ENCODE measurements at regions of chr1 and their contacts with region 1.

Region 1: GRCh38 chr1:19918057-19918456 is 5.4 kb downstream of the PLA2G2E start:
- DNase-seq: peak; percentile 81 to 93 (median 85)
- ATAC-seq: peak; percentile 76
- H3K4me3 ChIP-seq: no peak overlapping the region
- H3K27ac ChIP-seq: no peak overlapping the region
- H3K4me1 ChIP-seq: no peaks in the 10 kb centered on the region
- H3K27me3 ChIP-seq: no peaks in the 10 kb centered on the region

Region 2: GRCh38 chr1:19825298-19825697 is 92.8 kb before region 1 on chr1:
- intact Hi-C with region 1: no loop called
- DNase-seq: no peak
- ATAC-seq: no peak
- H3K4me3 ChIP-seq: no peak overlapping the region
- H3K27ac ChIP-seq: no peak overlapping the region
- H3K4me1 ChIP-seq: no peaks in the 10 kb centered on the region
- H3K27me3 ChIP-seq: no peaks in the 10 kb centered on the region

Region 3: DNA sequence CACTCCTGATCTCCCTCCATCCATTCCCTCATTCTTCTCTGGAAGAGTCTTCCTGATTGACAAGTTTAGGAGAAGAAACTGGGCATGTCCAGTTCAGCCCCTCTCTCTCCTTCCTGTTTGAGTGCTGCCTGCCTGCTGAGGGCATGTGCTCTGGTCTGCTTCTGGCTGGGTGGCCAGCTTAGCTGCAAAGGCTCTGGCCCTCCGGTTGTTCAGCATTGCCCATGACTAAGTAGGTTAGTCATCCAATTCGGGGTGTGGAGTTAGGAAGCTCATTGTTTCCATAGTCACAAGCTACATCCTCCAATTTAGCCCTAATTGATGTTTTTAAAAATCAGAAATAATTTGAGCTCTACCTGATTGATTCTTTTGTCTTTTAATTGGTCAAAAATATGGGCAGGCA is 31.0 kb after region 1 on chr1:
- intact Hi-C with region 1: no loop called
- DNase-seq: no peak
- ATAC-seq: peak in 1 of 2 donors; percentile 47
- H3K4me3 ChIP-seq: no peak overlapping the region
- H3K27ac ChIP-seq: no peak overlapping the region
- H3K4me1 ChIP-seq: no peaks in the 10 kb centered on the region
- H3K27me3 ChIP-seq: no peaks in the 10 kb centered on the region

Region 4: GRCh38 chr1:19974822-19975416 is 56.9 kb after region 1 on chr1:
- intact Hi-C with region 1: no loop called
- DNase-seq: peak; percentile 62 to 80 (median 65)
- ATAC-seq: peak; percentile 84 to 86
- H3K4me3 ChIP-seq: no peak overlapping the region
- H3K27ac ChIP-seq: peak overlapping the region; percentile 73
- H3K4me1 ChIP-seq: peaks cover 6% of the 10 kb centered on the region
- H3K27me3 ChIP-seq: no peaks in the 10 kb centered on the region

Region 5: DNA sequence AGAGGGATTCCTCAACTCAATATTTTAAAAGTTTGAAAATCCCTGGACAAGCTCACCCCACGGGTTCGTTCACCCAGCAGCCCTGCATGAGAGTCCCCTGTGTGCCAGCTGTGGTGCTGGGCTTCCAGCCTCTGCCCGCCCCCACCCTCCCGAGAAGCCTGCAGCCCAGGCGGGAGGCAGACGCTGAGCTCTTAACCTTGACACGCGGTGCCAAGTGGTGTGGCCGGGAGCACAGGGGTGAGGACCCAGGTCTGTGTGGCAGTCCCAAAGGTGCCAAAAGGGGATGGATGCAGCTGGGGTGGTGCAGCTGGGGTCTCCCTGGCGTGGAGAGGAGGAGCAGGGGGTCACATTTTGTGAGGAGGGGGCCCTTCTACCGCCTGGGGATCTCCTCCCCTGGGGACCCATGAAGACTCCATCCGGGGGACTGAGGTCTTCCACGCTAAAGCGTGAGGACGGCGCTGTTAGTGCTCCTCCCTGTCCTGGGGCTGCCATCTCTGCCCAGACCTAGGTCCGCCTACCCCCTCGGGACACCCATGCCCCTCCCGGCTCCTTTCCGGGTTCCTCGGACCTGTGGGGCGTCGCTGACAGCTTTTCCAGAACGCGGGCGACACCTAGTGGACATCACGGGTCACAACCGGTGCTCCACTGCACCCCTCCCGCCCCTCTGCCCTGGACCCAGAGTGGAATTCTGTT is 234.0 kb after region 1 on chr1:
- intact Hi-C with region 1: loop called (anchors 2 to 5 kb)
- DNase-seq: peak; percentile 93 to 96 (median 96)
- ATAC-seq: peak; percentile 88 to 92
- H3K4me3 ChIP-seq: no peak overlapping the region
- H3K27ac ChIP-seq: no peak overlapping the region
- H3K4me1 ChIP-seq: peaks cover 2% of the 10 kb centered on the region
- H3K27me3 ChIP-seq: no peaks in the 10 kb centered on the region

Region 6: DNA sequence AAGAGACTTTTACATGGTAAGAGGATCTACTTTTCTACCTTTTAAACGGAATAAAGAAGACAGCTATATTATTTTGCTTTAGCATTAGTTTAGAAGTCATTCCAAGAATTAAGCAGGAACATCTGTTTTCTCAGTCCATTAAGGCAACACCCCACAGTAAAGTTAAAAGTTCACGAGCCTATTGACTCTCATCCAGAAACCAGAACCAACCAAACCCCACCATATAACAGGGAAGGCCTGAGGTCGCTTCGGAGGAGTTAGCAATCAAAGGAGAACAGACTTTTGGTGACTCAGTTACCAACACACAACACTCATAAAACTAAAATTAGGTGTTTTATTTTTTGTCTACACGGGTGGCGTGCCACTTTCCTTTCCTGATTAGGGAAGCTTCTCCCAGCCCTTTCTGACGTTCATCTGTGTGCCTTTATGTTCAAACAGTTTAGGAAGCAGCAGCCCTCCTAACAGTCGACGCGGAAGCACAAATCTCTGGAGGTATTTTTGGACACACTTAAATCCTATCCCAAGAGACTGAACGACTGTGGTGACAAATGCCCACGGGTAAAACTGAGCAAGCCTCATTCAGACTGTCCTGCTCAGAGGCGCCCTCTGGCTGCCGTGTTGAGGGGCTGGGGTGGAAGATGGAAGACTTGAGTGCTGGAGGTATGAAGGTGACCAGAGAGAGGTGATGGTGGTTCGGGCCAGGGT is 276.9 kb after region 1 on chr1:
- intact Hi-C with region 1: loop called in 1 of 4 experiments (anchors 5 kb)
- DNase-seq: peak; percentile 73 to 89 (median 88)
- ATAC-seq: peak; percentile 72 to 79
- H3K4me3 ChIP-seq: no peak overlapping the region
- H3K27ac ChIP-seq: no peak overlapping the region
- H3K4me1 ChIP-seq: peaks cover 8% of the 10 kb centered on the region
- H3K27me3 ChIP-seq: no peaks in the 10 kb centered on the region

Region 7: GRCh38 chr1:20493839-20494608 is 576.0 kb after region 1 on chr1:
- intact Hi-C with region 1: loop called in 3 of 4 experiments (anchors 5 to 10 kb)
- DNase-seq: peak; percentile 80 to 94 (median 91)
- ATAC-seq: peak; percentile 82 to 88
- H3K4me3 ChIP-seq: no peak overlapping the region
- H3K27ac ChIP-seq: no peak overlapping the region
- H3K4me1 ChIP-seq: no peaks in the 10 kb centered on the region
- H3K27me3 ChIP-seq: no peaks in the 10 kb centered on the region

Region 8: DNA sequence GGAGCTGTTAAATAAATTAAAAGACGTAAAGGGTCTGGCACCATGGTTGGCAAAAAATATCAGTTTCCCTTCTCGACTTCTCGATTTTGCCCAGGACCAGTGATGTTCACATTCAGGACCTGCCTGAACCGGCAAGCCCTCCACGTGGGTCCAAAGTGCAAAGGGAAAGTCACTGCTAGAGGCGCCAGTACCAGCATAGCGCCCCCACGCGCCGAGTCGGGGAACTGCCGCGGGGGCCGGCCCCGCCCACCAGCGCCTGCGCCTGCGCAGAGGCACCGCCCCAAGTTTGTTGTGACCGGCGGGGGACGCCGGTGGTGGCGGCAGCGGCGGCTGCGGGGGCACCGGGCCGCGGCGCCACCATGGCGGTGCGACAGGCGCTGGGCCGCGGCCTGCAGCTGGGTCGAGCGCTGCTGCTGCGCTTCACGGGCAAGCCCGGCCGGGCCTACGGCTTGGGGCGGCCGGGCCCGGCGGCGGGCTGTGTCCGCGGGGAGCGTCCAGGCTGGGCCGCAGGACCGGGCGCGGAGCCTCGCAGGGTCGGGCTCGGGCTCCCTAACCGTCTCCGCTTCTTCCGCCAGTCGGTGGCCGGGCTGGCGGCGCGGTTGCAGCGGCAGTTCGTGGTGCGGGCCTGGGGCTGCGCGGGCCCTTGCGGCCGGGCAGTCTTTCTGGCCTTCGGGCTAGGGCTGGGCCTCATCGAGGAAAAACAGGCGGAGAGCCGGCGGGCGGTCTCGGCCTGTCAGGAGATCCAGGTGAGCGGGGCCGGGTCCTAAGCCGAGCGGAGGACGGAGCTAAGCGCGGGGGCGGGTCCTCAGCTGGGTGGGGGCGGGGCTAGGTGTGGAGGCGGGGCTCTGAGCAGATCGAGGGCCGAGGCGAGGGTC is 715.4 kb after region 1 on chr1 and contains the start of gene PINK1:
- intact Hi-C with region 1: loop called in 1 of 4 experiments (anchors 10 kb)
- DNase-seq: peak; percentile 78 to 93 (median 92)
- ATAC-seq: peak; percentile 91 to 93
- H3K4me3 ChIP-seq: peak within 1 kb of the TSS; percentile 95
- H3K27ac ChIP-seq: peak within 1 kb of the TSS; percentile 95
- H3K4me1 ChIP-seq: peaks cover 4% of the 10 kb centered on the region
- H3K27me3 ChIP-seq: no peaks in the 10 kb centered on the region
- total RNA-seq, gene PINK1: 143 to 161 (median 156) TPM

Measured in right cardiac atrium (tissue), 5 donors.